ENCODE measurements at regions of chr2 and their contacts with region 1.

Region 1: GRCh38 chr2:181258720-181259119 is 198.5 kb upstream of the ITGA4 start:
- DNase-seq: no peak
- ATAC-seq: no peak
- H3K4me3 ChIP-seq: no peak overlapping the region
- H3K27ac ChIP-seq: no peak overlapping the region
- H3K4me1 ChIP-seq: no peaks in the 10 kb centered on the region
- H3K27me3 ChIP-seq: no peaks in the 10 kb centered on the region
- CTCF ChIP-seq: no peak
- EP300 ChIP-seq: no peak
- POLR2A ChIP-seq: no peak
- RAD21 ChIP-seq: no peak

Region 2: GRCh38 chr2:181275643-181276070 is 16.9 kb after region 1 on chr2:
- CTCF ChIA-PET with region 1: interaction called, 3 read pairs
- POLR2A ChIA-PET with region 1: interaction called, 3 read pairs
- RAD21 ChIA-PET with region 1: no interaction called
- SMC1A ChIA-PET with region 1: interaction called, 10 read pairs
- in situ Hi-C with region 1: no loop called
- intact Hi-C with region 1: no loop called
- DNase-seq: no peak
- ATAC-seq: peak; percentile 86
- H3K4me3 ChIP-seq: no peak overlapping the region
- H3K27ac ChIP-seq: no peak overlapping the region
- H3K4me1 ChIP-seq: peaks cover 4% of the 10 kb centered on the region; the same call in 1 of the 2 replicates
- H3K27me3 ChIP-seq: no peaks in the 10 kb centered on the region
- CTCF ChIP-seq: 0 out of 6 replicates have a peak, but pooled peaks of 1 of the 3 experiments have one; percentile 4
- EP300 ChIP-seq: no peak
- POLR2A ChIP-seq: no peak
- RAD21 ChIP-seq: no peak

Region 3: DNA sequence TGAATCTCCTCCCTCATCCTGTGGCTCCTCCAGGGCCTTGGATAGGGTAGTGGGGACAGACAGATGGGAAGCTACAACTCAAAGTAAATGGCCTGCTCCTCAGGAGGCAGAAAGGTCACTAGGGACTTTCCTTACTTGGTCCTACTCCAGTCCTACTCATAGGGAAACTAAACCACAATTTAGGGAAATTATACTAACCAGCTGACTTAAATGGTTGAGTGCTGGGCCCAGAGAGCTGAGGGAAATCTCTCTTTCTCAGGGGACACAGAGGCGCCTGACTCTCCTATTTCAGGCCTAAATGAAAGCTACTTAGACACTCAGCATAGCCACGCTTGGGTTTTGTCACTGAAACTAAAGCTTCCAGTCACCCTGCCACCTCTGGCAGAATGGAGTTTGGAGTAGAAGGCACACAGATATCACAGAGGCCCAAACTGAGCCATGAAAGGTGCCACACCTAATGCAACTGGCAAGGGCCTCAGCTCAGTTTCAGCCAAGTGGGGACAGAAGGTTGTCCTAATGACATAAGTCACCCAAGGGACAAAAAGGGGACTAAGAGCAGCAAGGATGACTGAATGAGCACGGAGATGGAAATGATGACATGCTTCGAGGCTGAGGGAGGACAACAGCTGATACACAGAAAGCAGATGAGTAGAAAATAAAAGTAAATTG is 374.1 kb after region 1 on chr2:
- CTCF ChIA-PET with region 1: no interaction called
- POLR2A ChIA-PET with region 1: no interaction called
- RAD21 ChIA-PET with region 1: no interaction called
- SMC1A ChIA-PET with region 1: no interaction called
- in situ Hi-C with region 1: no loop called
- intact Hi-C with region 1: no loop called
- DNase-seq: peak; percentile 23
- ATAC-seq: peak; percentile 73
- H3K4me3 ChIP-seq: no peak overlapping the region
- H3K27ac ChIP-seq: no peak overlapping the region
- H3K4me1 ChIP-seq: no peaks in the 10 kb centered on the region; the same call in 1 of the 2 replicates
- H3K27me3 ChIP-seq: no peaks in the 10 kb centered on the region
- CTCF ChIP-seq: no peak
- EP300 ChIP-seq: no peak
- POLR2A ChIP-seq: no peak
- RAD21 ChIP-seq: no peak

Measured in GM12878 (cell line).